Activated CD8-positive, alpha-beta memory T cell treated with anti-CD3 and anti-CD28 coated beads, Interleukin-2, amount 10 ng/mL, durations not matched to agents 7 days and 5 days (primary cell): ENCODE measurements at regions of chr3 and their contacts with region 1.

Region 1: DNA sequence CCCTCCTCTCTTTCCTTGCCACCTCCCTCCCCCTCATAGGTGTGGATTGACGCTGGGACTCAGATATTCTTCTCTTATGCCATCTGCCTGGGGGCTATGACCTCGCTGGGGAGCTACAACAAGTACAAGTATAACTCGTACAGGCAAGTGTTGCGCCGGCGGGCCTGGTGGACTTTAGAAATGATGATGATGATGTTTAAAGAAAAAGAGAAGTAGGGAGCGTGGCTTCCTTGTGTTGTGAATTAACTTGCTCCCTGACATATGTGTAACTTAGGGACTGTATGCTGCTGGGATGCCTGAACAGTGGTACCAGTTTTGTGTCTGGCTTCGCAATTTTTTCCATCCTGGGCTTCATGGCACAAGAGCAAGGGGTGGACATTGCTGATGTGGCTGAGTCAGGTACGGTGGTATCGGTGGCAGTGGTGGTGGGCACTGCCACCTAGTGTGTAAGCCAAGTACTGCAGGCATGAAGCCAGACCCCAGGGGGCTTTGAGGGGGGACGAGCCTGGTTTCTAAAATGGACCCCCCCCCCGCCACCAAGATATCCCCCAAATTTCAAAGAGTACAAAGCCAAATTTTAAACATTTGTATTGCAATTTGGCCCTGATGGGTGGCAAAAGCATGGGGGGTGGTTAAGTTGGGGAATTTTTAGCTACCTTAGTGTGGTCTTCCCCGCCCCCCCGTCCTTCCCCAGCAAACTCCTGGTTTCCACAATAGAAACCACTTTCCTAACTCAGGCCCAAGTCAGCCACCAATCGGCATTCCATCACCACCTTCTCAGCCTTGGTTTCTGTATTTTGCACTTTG is 65.6 kb downstream of the SLC6A6 start:
- DNase-seq: peak; percentile 44
- ATAC-seq: peak; percentile 58
- H3K4me3 Mint-ChIP-seq: no peak overlapping the region
- H3K27ac Mint-ChIP-seq: no peak overlapping the region
- H3K4me1 Mint-ChIP-seq: peaks cover 6% of the 10 kb centered on the region
- H3K27me3 Mint-ChIP-seq: no peaks in the 10 kb centered on the region

Region 2: GRCh38 chr3:14261229-14261628 is 206.8 kb before region 1 on chr3:
- CTCF ChIA-PET with region 1: interaction called, 17 read pairs
- DNase-seq: peak; percentile 80
- ATAC-seq: peak; percentile 53
- H3K4me3 Mint-ChIP-seq: no peak overlapping the region
- H3K27ac Mint-ChIP-seq: no peak overlapping the region
- H3K4me1 Mint-ChIP-seq: peaks cover 4% of the 10 kb centered on the region
- H3K27me3 Mint-ChIP-seq: peaks cover 32% of the 10 kb centered on the region

Region 3: DNA sequence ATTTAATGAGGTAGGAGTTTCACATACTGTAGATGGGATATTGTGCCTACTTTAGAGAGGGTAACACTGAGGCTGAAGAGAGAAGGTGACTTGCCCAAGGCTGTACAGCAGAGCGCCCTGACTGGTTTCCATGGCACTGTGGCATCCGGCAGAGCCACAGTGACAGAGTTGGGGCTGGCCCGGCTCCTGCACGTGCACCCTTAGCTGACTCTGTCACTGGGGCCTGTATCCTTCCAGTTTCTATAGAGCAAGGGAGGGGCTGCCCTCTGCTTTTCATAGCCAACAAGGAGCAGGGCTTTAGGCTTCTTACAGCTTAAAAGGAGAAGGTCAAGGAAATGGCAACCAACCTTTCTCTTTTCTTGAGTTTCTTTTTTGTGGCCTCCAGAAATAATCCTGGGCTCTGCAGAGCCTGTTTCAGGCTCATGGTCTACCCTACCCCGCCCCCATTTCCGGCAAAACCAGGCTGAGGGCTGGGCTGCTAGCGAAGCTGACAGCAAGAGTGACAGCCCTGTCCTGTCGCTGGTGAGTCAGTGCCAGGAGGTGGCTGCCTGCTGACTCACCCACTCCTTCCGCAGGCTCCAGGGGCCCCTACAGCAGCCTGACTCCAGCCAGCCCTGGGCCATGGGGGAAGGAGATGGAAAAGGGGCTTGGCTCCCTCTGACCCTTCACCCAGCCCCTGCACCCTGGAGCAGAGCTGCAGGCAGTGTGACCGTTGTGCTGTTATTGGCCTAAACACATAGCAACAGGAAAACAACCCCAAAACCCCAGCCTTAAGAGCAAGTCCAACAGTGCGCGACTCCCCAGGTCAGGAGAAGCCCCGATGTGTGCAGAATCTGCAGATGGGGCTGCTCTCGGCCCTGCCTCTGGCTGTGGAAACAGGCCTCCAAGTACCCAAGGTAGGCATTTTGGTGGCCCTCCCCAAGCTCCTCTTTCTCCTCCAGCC is 35.9 kb before region 1 on chr3:
- CTCF ChIA-PET with region 1: interaction called, 19 read pairs
- DNase-seq: peak; percentile 99
- ATAC-seq: peak; percentile 92
- H3K4me3 Mint-ChIP-seq: peak overlapping the region; percentile 73
- H3K27ac Mint-ChIP-seq: peak overlapping the region; percentile 97
- H3K4me1 Mint-ChIP-seq: peaks cover 81% of the 10 kb centered on the region
- H3K27me3 Mint-ChIP-seq: no peaks in the 10 kb centered on the region